Activated T-helper 1 cell treated with anti-CD3 and anti-CD28 coated beads, Interleukin-12 subunit alpha, Interleukin-12 subunit beta, Interleukin-2, Interleukin-4 antibody, amounts not matched to agents 30 ng/mL and 10 ng/mL and 1 ng/mL, durations not matched to agents 14 hours and 24 hours and 36 hours (primary cell): ENCODE measurements at regions of chr16 and their contacts with region 1.

Region 1: DNA sequence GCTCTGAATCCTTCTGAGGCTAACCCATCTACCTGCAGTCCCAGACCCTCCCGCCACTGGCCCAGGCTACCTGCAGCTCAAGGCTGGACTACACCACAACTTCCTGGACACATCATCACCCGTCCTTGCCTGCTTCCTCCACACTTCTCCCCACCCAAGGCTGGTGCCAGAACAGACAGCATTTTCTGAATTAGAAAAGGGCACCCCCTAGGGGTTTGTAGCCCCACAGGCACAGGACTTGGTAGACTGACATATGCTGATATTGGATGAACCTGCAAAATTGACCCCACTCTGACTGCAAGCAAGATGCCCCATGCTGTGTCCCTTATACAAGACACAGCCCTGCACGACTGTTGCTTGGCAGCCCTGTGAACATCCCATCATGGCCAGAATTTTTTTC is 271.5 kb upstream of the C16orf82 start:
- DNase-seq: peak; percentile 14
- H3K4me3 Mint-ChIP-seq: no peak overlapping the region
- H3K27ac Mint-ChIP-seq: no peak overlapping the region
- H3K4me1 Mint-ChIP-seq: peaks cover 14% of the 10 kb centered on the region
- H3K27me3 Mint-ChIP-seq: no peaks in the 10 kb centered on the region

Region 2: GRCh38 chr16:26374279-26374925 is 420.8 kb before region 1 on chr16:
- intact Hi-C with region 1: no loop called
- DNase-seq: no peak
- H3K4me3 Mint-ChIP-seq: no peak overlapping the region
- H3K27ac Mint-ChIP-seq: no peak overlapping the region
- H3K4me1 Mint-ChIP-seq: no peaks in the 10 kb centered on the region
- H3K27me3 Mint-ChIP-seq: no peaks in the 10 kb centered on the region

Region 3: DNA sequence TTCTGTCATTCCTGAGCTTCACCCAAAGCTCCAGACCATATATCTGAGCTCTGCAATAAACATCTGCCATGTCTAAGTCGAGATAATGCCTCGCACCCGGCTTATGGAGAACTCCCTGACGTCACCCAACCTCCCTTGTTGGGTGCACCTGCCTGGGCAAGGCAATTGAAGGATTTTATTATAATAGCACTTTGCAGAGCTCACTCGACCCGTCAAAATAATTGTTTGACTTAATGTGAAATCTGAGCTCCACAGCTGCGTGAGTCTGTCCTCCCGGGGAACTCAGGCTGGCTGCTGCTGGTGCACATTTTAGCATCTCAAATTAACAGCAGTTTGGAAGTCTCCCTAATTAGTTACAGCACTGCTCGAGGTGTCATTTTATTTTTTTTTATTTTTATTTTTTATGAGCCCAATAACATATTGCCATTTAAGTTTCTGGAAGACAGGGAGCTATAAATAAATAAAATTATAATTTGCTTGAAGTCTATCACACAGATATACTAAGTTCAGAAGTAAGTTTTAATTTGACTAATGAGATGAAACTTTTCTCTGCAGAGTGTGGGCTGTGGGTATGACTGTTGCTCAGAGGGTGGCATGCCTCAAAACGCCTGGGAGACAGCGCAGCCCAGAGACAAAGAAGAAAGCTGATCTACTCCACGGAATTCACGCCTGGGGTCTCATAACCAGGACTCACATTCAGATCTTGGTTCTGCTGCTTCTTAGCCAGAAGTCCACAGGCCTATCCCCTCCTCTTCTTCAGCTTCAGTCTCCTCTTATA is 129.8 kb before region 1 on chr16:
- intact Hi-C with region 1: loop called (anchors 5 kb)
- DNase-seq: no peak
- H3K4me3 Mint-ChIP-seq: no peak overlapping the region
- H3K27ac Mint-ChIP-seq: peak overlapping the region; percentile 51
- H3K4me1 Mint-ChIP-seq: peaks cover 30% of the 10 kb centered on the region
- H3K27me3 Mint-ChIP-seq: no peaks in the 10 kb centered on the region